B cell (primary cell): ENCODE measurements at regions of chr17 and their contacts with region 1.

Region 1: GRCh38 chr17:2244545-2245525 is 58.8 kb downstream of the SMG6 start:
- DNase-seq: peak; percentile 83
- ATAC-seq: peak; percentile 68
- H3K4me3 ChIP-seq: no peak overlapping the region
- H3K4me3 Mint-ChIP-seq: no peak overlapping the region
- H3K27ac ChIP-seq: no peak overlapping the region
- H3K27ac Mint-ChIP-seq: peak overlapping the region; percentile 1
- H3K4me1 ChIP-seq: peaks cover 8 to 9% of the 10 kb centered on the region in 2 donors
- H3K4me1 Mint-ChIP-seq: peaks cover 11% of the 10 kb centered on the region
- H3K27me3 ChIP-seq: no peaks in the 10 kb centered on the region
- H3K27me3 Mint-ChIP-seq: no peaks in the 10 kb centered on the region
- CTCF ChIP-seq: peak; percentile 96

Region 2: GRCh38 chr17:1908699-1909309 is 336.0 kb before region 1 on chr17:
- CTCF ChIA-PET with region 1: interaction called, 13 read pairs
- POLR2A ChIA-PET with region 1: no interaction called
- intact Hi-C with region 1: loop called (anchors 1 kb)
- DNase-seq: peak; percentile 51
- ATAC-seq: peak; percentile 7
- H3K4me3 ChIP-seq: peak overlapping the region in 3 of 5 experiments; percentile 5 to 25 (median 19)
- H3K4me3 Mint-ChIP-seq: peak overlapping the region; percentile 50
- H3K27ac ChIP-seq: no peak overlapping the region
- H3K27ac Mint-ChIP-seq: no peak overlapping the region
- H3K4me1 ChIP-seq: peaks cover 24 to 29% of the 10 kb centered on the region in 2 donors
- H3K4me1 Mint-ChIP-seq: peaks cover 28% of the 10 kb centered on the region
- H3K27me3 ChIP-seq: peaks cover 0 to 67% (median 38%) of the 10 kb centered on the region in 4 experiments
- H3K27me3 Mint-ChIP-seq: peaks cover 54% of the 10 kb centered on the region
- CTCF ChIP-seq: no peak

Region 3: DNA sequence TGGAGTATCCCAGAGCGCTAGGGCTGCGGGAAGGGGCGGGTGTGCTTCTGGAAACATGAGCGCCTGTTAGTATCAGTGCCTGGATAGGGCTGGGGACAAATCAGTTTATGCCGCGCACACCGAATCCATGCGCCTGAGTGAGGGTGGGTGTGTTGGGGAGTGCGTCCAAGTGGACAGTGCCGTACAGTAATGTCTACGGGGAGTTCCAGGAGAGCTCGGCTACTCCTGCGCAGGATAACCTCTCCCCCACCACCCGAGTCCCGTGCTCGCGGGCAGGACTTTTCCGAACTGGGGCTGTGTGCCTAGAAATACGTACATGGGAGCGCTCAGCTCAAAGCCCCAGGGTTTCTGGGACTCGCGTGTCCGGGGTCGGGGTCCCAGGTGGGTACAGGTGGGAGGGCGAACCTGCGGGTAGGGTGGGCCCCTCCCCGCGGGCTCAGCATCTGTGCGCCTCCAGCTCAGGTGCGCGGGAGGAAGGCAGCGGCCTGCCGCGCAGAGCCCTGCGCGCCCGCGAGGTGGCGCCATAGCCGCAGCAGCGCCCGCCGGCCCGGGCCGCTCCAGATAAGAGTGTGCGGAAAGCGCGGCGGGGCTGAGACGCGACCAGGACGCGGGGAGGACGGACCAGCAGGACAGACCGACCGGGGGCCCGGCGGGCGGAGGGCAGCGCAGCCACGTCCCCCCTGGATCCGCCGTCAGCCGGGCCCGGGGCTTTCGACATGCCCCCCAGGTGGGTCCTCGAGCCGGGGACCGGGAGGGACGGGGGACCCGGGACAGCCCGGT is 190.1 kb before region 1 on chr17 and contains the start of gene HIC1:
- CTCF ChIA-PET with region 1: interaction called, 330 read pairs
- POLR2A ChIA-PET with region 1: interaction called, 5 read pairs
- intact Hi-C with region 1: loop called (anchors 1 kb)
- DNase-seq: peak; percentile 89
- ATAC-seq: peak; percentile 38
- H3K4me3 ChIP-seq: peak within 1 kb of the TSS in 3 of 5 experiments; percentile 44 to 57 (median 52)
- H3K4me3 Mint-ChIP-seq: peak within 1 kb of the TSS; percentile 80
- H3K27ac ChIP-seq: no peak within 1 kb of the TSS
- H3K27ac Mint-ChIP-seq: peak within 1 kb of the TSS; percentile 67
- H3K4me1 ChIP-seq: peaks cover 55 to 75% of the 10 kb centered on the region in 2 donors
- H3K4me1 Mint-ChIP-seq: peaks cover 36% of the 10 kb centered on the region
- H3K27me3 ChIP-seq: peaks cover 0 to 59% (median 14%) of the 10 kb centered on the region in 4 experiments
- H3K27me3 Mint-ChIP-seq: peaks cover 7% of the 10 kb centered on the region
- CTCF ChIP-seq: peak; percentile 95
- total RNA-seq, gene HIC1: 1.5 and 1.9 TPM in 2 replicates

Region 4: GRCh38 chr17:2090804-2091534 is 153.9 kb before region 1 on chr17:
- CTCF ChIA-PET with region 1: interaction called, 32 read pairs
- POLR2A ChIA-PET with region 1: no interaction called
- intact Hi-C with region 1: no loop called
- DNase-seq: no peak
- ATAC-seq: no peak
- H3K4me3 ChIP-seq: no peak overlapping the region
- H3K4me3 Mint-ChIP-seq: peak overlapping the region; percentile 92
- H3K27ac ChIP-seq: no peak overlapping the region
- H3K27ac Mint-ChIP-seq: peak overlapping the region; percentile 51
- H3K4me1 ChIP-seq: peaks cover 45 to 51% of the 10 kb centered on the region in 2 donors
- H3K4me1 Mint-ChIP-seq: peaks cover 52% of the 10 kb centered on the region
- H3K27me3 ChIP-seq: no peaks in the 10 kb centered on the region
- H3K27me3 Mint-ChIP-seq: no peaks in the 10 kb centered on the region
- CTCF ChIP-seq: no peak

Region 5: GRCh38 chr17:2170023-2170422 is 74.8 kb before region 1 on chr17:
- CTCF ChIA-PET with region 1: interaction called, 16 read pairs
- POLR2A ChIA-PET with region 1: no interaction called
- intact Hi-C with region 1: no loop called
- DNase-seq: peak; percentile 48
- ATAC-seq: no peak
- H3K4me3 ChIP-seq: no peak overlapping the region
- H3K4me3 Mint-ChIP-seq: no peak overlapping the region
- H3K27ac ChIP-seq: no peak overlapping the region
- H3K27ac Mint-ChIP-seq: no peak overlapping the region
- H3K4me1 ChIP-seq: no peaks in the 10 kb centered on the region
- H3K4me1 Mint-ChIP-seq: no peaks in the 10 kb centered on the region
- H3K27me3 ChIP-seq: no peaks in the 10 kb centered on the region
- H3K27me3 Mint-ChIP-seq: no peaks in the 10 kb centered on the region
- CTCF ChIP-seq: peak; percentile 29

Region 6: GRCh38 chr17:2222901-2223616 is 21.8 kb before region 1 on chr17:
- CTCF ChIA-PET with region 1: interaction called, 19 read pairs
- POLR2A ChIA-PET with region 1: no interaction called
- intact Hi-C with region 1: no loop called
- DNase-seq: peak; percentile 44
- ATAC-seq: peak; percentile 70
- H3K4me3 ChIP-seq: no peak overlapping the region
- H3K4me3 Mint-ChIP-seq: peak overlapping the region; percentile 14
- H3K27ac ChIP-seq: no peak overlapping the region
- H3K27ac Mint-ChIP-seq: peak overlapping the region; percentile 37
- H3K4me1 ChIP-seq: peaks cover 3 to 5% of the 10 kb centered on the region in 2 donors
- H3K4me1 Mint-ChIP-seq: peaks cover 17% of the 10 kb centered on the region
- H3K27me3 ChIP-seq: no peaks in the 10 kb centered on the region
- H3K27me3 Mint-ChIP-seq: no peaks in the 10 kb centered on the region
- CTCF ChIP-seq: no peak

Region 7: GRCh38 chr17:2282297-2282873 is 37.5 kb after region 1 on chr17:
- CTCF ChIA-PET with region 1: interaction called, 13 read pairs
- POLR2A ChIA-PET with region 1: no interaction called
- intact Hi-C with region 1: no loop called
- DNase-seq: peak; percentile 71
- ATAC-seq: peak; percentile 41
- H3K4me3 ChIP-seq: no peak overlapping the region
- H3K4me3 Mint-ChIP-seq: no peak overlapping the region
- H3K27ac ChIP-seq: no peak overlapping the region
- H3K27ac Mint-ChIP-seq: peak overlapping the region; percentile 46
- H3K4me1 ChIP-seq: no peaks in the 10 kb centered on the region
- H3K4me1 Mint-ChIP-seq: no peaks in the 10 kb centered on the region
- H3K27me3 ChIP-seq: no peaks in the 10 kb centered on the region
- H3K27me3 Mint-ChIP-seq: no peaks in the 10 kb centered on the region
- CTCF ChIP-seq: peak; percentile 79

Region 8: GRCh38 chr17:2347547-2348307 is 102.9 kb after region 1 on chr17:
- CTCF ChIA-PET with region 1: no interaction called
- POLR2A ChIA-PET with region 1: no interaction called
- intact Hi-C with region 1: no loop called
- DNase-seq: no peak
- ATAC-seq: no peak
- H3K4me3 ChIP-seq: no peak overlapping the region
- H3K4me3 Mint-ChIP-seq: no peak overlapping the region
- H3K27ac ChIP-seq: no peak overlapping the region
- H3K27ac Mint-ChIP-seq: no peak overlapping the region
- H3K4me1 ChIP-seq: no peaks in the 10 kb centered on the region
- H3K4me1 Mint-ChIP-seq: no peaks in the 10 kb centered on the region
- H3K27me3 ChIP-seq: no peaks in the 10 kb centered on the region
- H3K27me3 Mint-ChIP-seq: no peaks in the 10 kb centered on the region
- CTCF ChIP-seq: no peak